Panc1 (cell line): ENCODE measurements at regions of chr21 and their contacts with region 1.

Region 1: DNA sequence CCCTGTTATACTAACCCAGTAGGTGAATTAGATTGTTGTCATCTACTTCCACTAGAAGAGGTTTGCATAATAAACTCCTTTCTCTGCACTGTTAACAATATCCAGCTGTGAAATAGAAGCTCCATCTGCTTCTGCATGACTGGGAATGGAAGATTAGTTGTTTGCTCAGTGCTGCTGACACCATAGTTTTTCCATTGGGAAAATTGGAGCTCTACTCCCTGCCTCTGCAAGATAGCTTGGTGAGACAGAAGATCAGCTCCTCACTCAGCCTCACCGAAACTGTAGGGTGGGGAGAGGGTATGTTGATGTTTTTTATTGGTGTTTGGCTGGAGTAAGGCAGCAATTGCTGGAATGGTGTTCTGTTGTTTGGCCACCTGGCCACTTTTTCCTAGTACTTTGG is 331.6 kb upstream of the ADAMTS5 start:
- DNase-seq: no peak
- ATAC-seq: no peak
- H3K4me3 ChIP-seq: no peak overlapping the region
- H3K27ac ChIP-seq: no peak overlapping the region
- H3K4me1 ChIP-seq: no peaks in the 10 kb centered on the region
- H3K27me3 ChIP-seq: no peaks in the 10 kb centered on the region
- CTCF ChIP-seq: no peak

Region 2: DNA sequence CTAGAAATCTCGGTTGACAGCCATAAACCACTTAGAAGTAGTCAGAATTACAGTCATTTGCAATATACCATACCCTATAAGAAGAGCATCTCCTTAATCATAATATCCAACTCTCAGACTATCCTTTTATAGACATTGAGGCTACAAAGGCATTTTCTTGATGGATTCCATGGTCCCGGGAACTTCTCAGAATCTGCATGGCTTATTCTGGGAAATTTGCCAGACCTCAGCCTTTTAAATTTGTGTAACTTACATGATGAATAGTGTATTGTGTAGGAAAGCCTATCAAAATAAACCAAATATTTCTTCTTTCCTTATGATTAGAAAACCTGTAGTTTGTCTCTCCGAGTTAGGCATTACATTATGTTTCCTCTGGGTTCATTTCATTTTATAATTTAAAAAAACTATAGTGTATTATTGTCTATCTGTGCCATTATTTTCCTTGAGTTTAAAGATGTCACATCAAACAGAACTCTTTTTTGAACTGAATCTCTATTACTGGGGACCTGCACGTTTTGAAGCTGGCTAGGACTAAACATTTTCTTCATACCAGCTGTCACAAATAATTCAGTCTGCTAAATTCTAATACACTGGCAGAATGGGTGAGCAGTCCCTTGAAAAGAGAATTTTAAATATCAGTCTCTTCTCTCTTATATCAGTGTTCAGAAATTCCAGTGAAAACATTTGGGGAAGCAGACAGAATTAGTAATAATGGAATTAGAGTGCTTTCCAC is 1460.8 kb before region 1 on chr21:
- CTCF ChIA-PET with region 1: interaction called, 14 read pairs
- POLR2A ChIA-PET with region 1: no interaction called
- in situ Hi-C with region 1: no loop called
- intact Hi-C with region 1: no loop called
- DNase-seq: no peak
- ATAC-seq: no peak
- H3K4me3 ChIP-seq: no peak overlapping the region
- H3K27ac ChIP-seq: no peak overlapping the region
- H3K4me1 ChIP-seq: no peaks in the 10 kb centered on the region
- H3K27me3 ChIP-seq: peaks cover 2% of the 10 kb centered on the region; the same call in 1 of the 2 replicates
- CTCF ChIP-seq: no peak

Region 3: GRCh38 chr21:27206368-27206982 is 92.0 kb before region 1 on chr21:
- CTCF ChIA-PET with region 1: no interaction called
- POLR2A ChIA-PET with region 1: no interaction called
- in situ Hi-C with region 1: no loop called
- intact Hi-C with region 1: no loop called
- DNase-seq: no peak
- ATAC-seq: no peak
- H3K4me3 ChIP-seq: no peak overlapping the region
- H3K27ac ChIP-seq: no peak overlapping the region
- H3K4me1 ChIP-seq: no peaks in the 10 kb centered on the region
- H3K27me3 ChIP-seq: no peaks in the 10 kb centered on the region
- CTCF ChIP-seq: no peak

Region 4: DNA sequence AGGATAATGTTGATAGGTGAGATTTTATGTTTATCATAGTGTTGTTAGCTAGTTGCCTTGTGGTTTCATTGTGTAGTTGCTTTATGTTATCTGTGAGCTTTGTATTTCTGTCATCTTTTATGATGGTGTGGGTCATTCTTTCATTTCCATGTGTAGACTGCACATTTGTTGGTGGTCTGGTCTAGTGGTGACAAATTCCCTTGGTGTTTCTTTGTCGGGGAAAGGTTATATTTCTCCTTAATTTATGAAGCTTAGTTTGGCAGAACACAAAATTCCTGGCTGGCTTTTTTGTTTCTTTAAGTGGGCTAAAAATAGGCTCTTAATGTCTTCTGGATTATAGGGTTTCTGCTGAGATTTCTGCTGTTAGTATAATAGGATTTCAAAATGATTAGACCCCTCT is 15.7 kb after region 1 on chr21:
- CTCF ChIA-PET with region 1: no interaction called
- POLR2A ChIA-PET with region 1: no interaction called
- in situ Hi-C with region 1: no loop called
- intact Hi-C with region 1: no loop called
- DNase-seq: no peak
- ATAC-seq: no peak
- H3K4me3 ChIP-seq: no peak overlapping the region
- H3K27ac ChIP-seq: no peak overlapping the region
- H3K4me1 ChIP-seq: no peaks in the 10 kb centered on the region
- H3K27me3 ChIP-seq: no peaks in the 10 kb centered on the region
- CTCF ChIP-seq: no peak